ENCODE measurements at regions of chr1 and their contacts with region 1.

Region 1: DNA sequence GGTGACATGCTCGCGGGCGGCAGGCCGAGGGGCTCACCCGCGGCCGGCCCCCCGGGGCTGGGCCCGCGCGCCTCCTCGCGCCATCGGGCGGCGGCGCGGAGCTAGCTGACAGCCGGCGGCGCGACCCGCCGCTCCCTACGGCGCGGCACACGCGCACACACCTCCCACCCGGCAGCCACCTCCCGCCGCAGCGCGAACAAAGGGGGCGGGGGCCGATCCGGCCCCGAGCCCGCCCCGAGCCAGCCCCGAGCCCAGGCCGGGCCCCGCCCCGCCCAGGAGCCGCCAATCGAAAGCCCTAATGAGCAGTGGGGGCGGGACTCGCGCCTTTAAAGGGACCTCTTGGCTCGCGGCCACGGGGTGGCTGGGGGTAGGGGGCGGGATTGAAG is at the start of gene KIF21B:
- DNase-seq: peak; percentile 87 to 95 (median 91)
- ATAC-seq: peak; percentile 80
- H3K4me3 ChIP-seq: peak within 1 kb of the TSS; percentile 64 to 73
- H3K4me3 Mint-ChIP-seq: peak within 1 kb of the TSS; percentile 94
- H3K27ac ChIP-seq: peak within 1 kb of the TSS; percentile 62 to 73
- H3K27ac Mint-ChIP-seq: peak within 1 kb of the TSS; percentile 99
- H3K4me1 ChIP-seq: peaks cover 56% of the 10 kb centered on the region
- H3K4me1 Mint-ChIP-seq: peaks cover 71% of the 10 kb centered on the region
- H3K27me3 ChIP-seq: no peaks in the 10 kb centered on the region
- H3K27me3 Mint-ChIP-seq: no peaks in the 10 kb centered on the region
- CTCF ChIP-seq: no peak
- total RNA-seq, gene KIF21B: 62.2 to 63.5 TPM

Region 2: DNA sequence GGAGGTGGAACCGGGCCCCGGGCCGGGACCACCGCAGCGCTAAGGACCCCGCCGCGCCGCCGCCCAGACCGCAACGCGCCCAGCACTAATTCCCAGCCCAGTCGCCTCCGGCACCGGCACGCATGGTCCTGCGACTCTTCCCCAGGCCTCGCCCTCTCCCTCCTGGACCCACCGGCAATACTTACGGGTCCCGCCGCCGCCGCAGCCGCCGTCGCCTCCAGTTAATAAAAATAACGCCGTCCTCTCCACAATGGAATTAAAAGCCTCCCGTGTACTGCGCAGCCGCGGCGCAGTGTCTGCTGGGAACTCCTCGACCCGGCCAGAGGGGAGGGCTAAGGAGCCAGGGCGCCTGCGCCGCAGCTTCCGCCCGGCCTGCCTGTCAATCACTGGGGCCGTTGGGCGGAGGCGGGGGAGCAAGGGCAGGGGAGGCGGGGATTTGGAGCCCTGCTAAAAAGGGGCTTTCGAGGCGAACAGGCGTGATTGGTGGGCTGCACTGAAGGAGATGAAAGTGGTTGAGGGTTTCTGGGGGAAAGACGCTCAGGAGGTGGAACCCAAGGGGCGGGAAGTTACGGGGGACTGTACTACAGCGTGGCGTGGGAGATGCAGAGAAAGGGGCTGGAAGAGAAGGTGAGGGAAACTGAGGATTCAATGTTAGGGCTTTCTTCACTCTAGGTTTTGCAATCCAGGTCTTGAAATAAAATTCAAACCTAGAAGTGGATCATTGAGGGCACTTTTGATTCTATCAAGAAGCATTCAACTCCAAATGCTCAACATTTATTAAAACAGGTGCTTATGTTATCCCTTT is 613.5 kb before region 1 on chr1 and contains the start of gene ZNF281:
- CTCF ChIA-PET with region 1: no interaction called
- POLR2A ChIA-PET with region 1: no interaction called
- intact Hi-C with region 1: loop called in 1 of 2 experiments (anchors 2 kb)
- DNase-seq: peak; percentile 91 to 98 (median 95)
- ATAC-seq: peak; percentile 95
- H3K4me3 ChIP-seq: peak within 1 kb of the TSS; percentile 78 to 95
- H3K4me3 Mint-ChIP-seq: peak within 1 kb of the TSS; percentile 99
- H3K27ac ChIP-seq: peak within 1 kb of the TSS; percentile 71 to 76
- H3K27ac Mint-ChIP-seq: peak within 1 kb of the TSS; percentile 98
- H3K4me1 ChIP-seq: peaks cover 47% of the 10 kb centered on the region
- H3K4me1 Mint-ChIP-seq: peaks cover 52% of the 10 kb centered on the region
- H3K27me3 ChIP-seq: no peaks in the 10 kb centered on the region
- H3K27me3 Mint-ChIP-seq: no peaks in the 10 kb centered on the region
- CTCF ChIP-seq: no peak
- total RNA-seq, gene ZNF281: 31.0 to 32.9 TPM

Region 3: DNA sequence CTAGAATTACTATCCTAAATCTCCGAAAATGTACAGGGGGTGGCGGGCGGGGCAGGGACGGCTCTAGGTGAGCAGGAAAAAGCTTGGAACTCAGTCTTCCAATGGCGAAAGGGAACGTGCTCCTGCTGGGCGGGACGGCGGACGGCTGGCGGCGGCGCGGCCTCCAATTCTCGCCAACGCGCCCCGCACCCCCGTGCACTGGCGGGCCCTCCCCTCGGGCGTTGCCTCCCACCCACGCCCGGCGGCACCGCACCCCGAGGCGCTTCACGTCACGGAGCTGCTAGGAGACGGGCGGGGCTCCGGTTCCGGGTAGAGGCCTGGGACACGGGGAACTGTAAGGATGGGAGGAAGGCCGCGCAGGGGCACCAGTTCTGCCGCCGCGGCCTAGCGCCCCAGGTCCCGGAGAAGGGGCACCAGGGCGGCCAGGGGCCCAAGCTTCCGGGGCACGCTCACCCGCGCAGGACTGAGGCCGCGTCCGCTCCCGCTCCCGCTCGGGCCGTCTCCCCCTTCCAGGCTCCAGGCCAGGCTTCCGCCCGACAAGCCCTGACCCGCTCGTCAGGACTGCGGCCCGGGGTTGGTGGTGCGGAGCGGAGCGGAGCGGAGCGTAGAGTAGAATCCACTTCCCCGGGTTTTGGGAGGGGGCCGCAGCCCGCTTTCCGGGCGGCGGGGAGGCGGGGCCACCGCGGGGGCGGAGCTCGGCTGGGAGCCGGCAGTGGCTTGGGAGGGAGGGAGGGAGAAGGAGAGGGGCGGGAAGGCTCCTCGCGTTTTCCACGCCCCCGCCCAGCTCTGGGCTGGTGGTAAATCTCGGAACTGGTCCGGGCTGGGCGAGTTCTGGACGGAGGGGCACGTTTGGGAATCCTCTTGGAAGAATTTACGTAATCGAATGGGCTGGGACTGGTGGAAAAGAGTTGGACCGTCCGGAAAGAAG is 353.9 kb before region 1 on chr1 and contains the start of gene DDX59:
- CTCF ChIA-PET with region 1: no interaction called
- POLR2A ChIA-PET with region 1: interaction called, 3 read pairs
- intact Hi-C with region 1: loop called in 1 of 2 experiments (anchors 5 kb)
- DNase-seq: peak; percentile 67 to 93 (median 89)
- ATAC-seq: peak; percentile 89
- H3K4me3 ChIP-seq: peak within 1 kb of the TSS; percentile 82 to 94
- H3K4me3 Mint-ChIP-seq: peak within 1 kb of the TSS; percentile 94
- H3K27ac ChIP-seq: peak within 1 kb of the TSS; percentile 95 to 98
- H3K27ac Mint-ChIP-seq: peak within 1 kb of the TSS; percentile 94
- H3K4me1 ChIP-seq: peaks cover 21% of the 10 kb centered on the region
- H3K4me1 Mint-ChIP-seq: peaks cover 42% of the 10 kb centered on the region
- H3K27me3 ChIP-seq: no peaks in the 10 kb centered on the region
- H3K27me3 Mint-ChIP-seq: no peaks in the 10 kb centered on the region
- CTCF ChIP-seq: no peak
- total RNA-seq, gene DDX59: 24.0 to 32.9 TPM

Region 4: DNA sequence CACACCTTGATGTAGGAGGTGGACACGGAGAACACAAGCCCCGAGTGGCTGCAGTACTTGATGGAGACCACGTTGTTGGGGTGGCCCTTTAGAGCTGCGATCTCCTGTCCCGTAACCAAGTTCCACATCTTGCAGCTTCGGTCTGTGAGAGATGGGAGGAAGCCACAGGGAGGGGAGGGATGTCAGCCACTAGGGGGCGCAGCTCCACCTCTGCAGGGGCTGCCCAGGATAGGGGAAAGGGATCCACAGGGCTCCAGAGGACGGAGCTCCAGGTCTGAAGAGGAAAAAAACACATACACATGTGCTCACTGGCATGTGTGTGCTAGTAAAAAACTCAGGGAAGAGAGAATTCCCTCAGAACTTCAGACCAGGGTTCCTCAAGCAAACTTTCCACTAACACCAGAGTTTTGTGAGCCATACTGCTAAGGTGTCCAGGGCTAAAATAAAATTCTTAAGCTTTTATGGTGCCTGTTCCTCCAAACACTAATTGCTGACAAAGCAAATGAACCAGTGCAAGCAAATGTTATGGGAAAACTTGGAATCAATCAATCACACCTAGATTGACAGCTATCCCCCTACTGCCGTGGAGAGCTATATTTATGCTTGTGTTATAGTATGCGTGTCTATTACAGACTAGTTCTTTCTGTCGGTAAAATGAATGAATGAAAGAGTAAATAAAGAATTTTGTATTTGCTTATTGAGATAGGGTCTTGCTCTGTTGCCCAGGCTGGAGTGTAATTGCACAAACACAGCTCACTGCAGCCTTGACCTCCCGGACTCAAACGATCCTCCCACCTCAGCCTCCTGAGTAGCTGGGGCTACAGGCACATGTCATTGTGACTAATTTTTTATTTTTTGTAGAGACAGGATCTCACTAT is 43.7 kb before region 1 on chr1:
- CTCF ChIA-PET with region 1: interaction called, 21 read pairs
- POLR2A ChIA-PET with region 1: interaction called, 5 read pairs
- intact Hi-C with region 1: no loop called
- DNase-seq: peak; percentile 26 to 80 (median 67)
- ATAC-seq: peak; percentile 61
- H3K4me3 ChIP-seq: no peak overlapping the region
- H3K4me3 Mint-ChIP-seq: no peak overlapping the region
- H3K27ac ChIP-seq: no peak overlapping the region
- H3K27ac Mint-ChIP-seq: peak overlapping the region; percentile 23
- H3K4me1 ChIP-seq: no peaks in the 10 kb centered on the region
- H3K4me1 Mint-ChIP-seq: no peaks in the 10 kb centered on the region
- H3K27me3 ChIP-seq: no peaks in the 10 kb centered on the region
- H3K27me3 Mint-ChIP-seq: no peaks in the 10 kb centered on the region
- CTCF ChIP-seq: peak; percentile 66

Region 5: DNA sequence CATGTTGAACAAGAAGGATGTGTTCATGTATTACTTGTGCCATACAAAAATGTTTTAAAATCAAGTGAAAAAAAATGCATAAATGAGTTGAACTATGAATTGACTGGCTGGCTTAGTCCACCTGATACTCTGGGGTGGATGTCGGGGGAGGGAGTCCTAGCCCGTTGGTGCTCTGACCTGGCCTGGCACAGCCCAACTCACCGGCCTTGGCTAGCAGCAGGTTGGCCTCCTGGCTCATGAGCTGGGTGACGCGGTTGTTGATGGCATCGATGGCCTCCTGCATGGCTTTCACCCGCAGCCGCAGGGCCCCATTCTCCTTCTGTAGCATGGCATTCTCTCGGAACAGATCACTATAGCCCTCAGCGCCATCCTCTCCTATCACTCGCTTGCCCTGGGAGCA is 21.6 kb before region 1 on chr1:
- CTCF ChIA-PET with region 1: interaction called, 4 read pairs
- POLR2A ChIA-PET with region 1: interaction called, 3 read pairs
- intact Hi-C with region 1: loop called in 1 of 2 experiments (anchors 2 kb)
- DNase-seq: no peak
- ATAC-seq: no peak
- H3K4me3 ChIP-seq: no peak overlapping the region
- H3K4me3 Mint-ChIP-seq: no peak overlapping the region
- H3K27ac ChIP-seq: no peak overlapping the region
- H3K27ac Mint-ChIP-seq: peak overlapping the region; percentile 32
- H3K4me1 ChIP-seq: no peaks in the 10 kb centered on the region
- H3K4me1 Mint-ChIP-seq: no peaks in the 10 kb centered on the region
- H3K27me3 ChIP-seq: no peaks in the 10 kb centered on the region
- H3K27me3 Mint-ChIP-seq: no peaks in the 10 kb centered on the region
- CTCF ChIP-seq: no peak

Region 6: DNA sequence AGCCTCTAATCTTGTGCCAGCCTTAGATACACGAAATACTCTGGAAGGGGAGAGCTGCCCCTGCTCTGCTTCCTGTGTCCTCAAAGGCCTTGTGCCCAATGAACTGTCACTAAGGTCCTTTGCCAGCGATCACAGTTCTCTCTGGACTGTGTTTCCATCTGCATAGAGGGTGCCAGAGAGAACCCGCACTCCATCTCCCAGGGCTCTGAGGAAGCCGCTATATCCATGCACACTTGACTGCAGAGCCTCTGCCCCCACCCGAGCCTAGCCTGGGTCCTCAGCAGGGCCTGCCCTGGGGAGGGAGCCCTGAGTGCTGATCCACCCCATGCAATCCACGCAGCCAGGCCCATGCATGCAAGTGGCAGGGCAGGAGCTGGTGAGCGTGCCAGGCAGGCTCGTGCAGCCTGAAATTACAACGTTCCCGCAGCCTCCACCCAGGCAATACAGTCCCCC is 30.6 kb after region 1 on chr1:
- CTCF ChIA-PET with region 1: no interaction called
- POLR2A ChIA-PET with region 1: no interaction called
- intact Hi-C with region 1: no loop called
- DNase-seq: no peak
- ATAC-seq: no peak
- H3K4me3 ChIP-seq: no peak overlapping the region
- H3K4me3 Mint-ChIP-seq: no peak overlapping the region
- H3K27ac ChIP-seq: no peak overlapping the region
- H3K27ac Mint-ChIP-seq: no peak overlapping the region
- H3K4me1 ChIP-seq: no peaks in the 10 kb centered on the region
- H3K4me1 Mint-ChIP-seq: no peaks in the 10 kb centered on the region
- H3K27me3 ChIP-seq: no peaks in the 10 kb centered on the region
- H3K27me3 Mint-ChIP-seq: no peaks in the 10 kb centered on the region
- CTCF ChIP-seq: no peak

Region 7: DNA sequence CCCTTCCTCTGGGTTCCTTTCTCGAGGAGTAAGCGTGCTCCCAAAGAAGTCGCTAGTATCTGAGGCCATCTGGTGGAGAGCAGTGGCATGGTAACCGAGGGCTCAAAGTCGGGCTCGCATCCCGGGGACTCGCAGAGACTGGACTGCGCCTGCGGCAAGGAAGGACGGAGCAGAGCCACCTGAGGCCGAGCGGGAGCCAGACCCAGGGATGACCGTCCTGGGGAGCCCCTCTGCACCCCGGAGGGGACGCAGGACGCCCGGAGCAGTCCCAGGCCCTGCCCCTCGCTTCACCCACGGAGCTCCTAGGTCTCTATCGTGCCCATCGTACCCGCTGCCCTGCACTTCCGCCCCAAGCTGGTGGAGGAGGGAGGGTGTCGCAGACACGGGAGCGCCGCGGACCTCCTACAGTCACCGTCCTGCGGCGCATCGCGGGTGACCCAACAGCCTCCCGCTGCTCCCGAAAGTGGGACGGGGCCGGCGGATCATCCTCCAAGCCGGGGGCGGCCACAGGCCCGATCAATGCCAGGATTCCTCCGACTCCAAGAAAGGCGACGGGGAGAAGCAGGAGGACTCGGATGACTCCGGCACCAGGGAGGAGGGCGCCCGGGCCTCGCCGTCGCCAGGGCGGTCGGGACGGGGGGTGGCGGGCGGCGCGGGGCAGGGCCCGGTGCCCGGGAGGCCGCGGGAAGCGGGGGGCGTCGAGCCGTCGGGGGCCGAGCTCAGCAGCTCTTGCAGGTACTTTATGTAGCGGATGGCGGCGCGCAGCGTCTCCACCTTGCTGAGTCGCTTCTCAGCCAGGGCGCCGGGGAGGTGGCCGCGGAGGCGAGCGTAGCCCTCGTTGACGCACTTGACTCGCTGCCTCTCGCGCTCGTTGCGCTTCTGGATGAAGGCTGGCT is 91.0 kb after region 1 on chr1:
- CTCF ChIA-PET with region 1: interaction called, 3 read pairs
- POLR2A ChIA-PET with region 1: interaction called, 4 read pairs
- intact Hi-C with region 1: loop called (anchors 1 to 5 kb)
- DNase-seq: peak; percentile 47 to 85 (median 71)
- ATAC-seq: peak; percentile 80
- H3K4me3 ChIP-seq: peak overlapping the region; percentile 67 to 87
- H3K4me3 Mint-ChIP-seq: peak overlapping the region; percentile 91
- H3K27ac ChIP-seq: peak overlapping the region; percentile 40 to 51
- H3K27ac Mint-ChIP-seq: peak overlapping the region; percentile 90
- H3K4me1 ChIP-seq: peaks cover 13% of the 10 kb centered on the region
- H3K4me1 Mint-ChIP-seq: peaks cover 29% of the 10 kb centered on the region
- H3K27me3 ChIP-seq: no peaks in the 10 kb centered on the region
- H3K27me3 Mint-ChIP-seq: no peaks in the 10 kb centered on the region
- CTCF ChIP-seq: peak; percentile 72